ENCODE measurements at regions of chr16 and their contacts with region 1.

Region 1: DNA sequence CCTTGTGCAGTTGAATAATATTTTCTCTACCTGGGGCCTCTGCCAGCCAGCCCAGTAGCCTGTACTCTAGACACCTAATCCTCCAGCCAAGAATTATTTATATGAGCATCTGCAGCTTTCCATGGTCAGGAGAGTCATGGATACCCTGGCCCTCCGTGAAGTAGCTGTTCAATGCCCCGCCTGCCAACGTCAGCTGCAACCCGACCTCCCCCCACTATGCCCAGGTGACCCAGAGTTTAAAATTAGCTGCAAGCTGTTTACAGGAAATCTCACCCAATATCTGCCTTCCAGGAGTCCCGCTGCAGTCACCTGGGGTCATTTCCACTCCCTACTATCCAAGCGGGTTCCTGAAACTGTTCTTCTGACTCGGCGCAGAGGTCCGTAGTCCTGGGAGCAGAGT is 12.3 kb downstream of the SDR42E2 start:
- DNase-seq: no peak
- H3K4me3 ChIP-seq: no peak overlapping the region
- H3K27ac ChIP-seq: no peak overlapping the region
- H3K4me1 ChIP-seq: no peaks in the 10 kb centered on the region
- H3K27me3 ChIP-seq: no peaks in the 10 kb centered on the region
- CTCF ChIP-seq: no peak

Region 2: GRCh38 chr16:22109258-22109898 is 65.3 kb before region 1 on chr16:
- intact Hi-C with region 1: loop called (anchors 10 kb)
- DNase-seq: no peak
- H3K4me3 ChIP-seq: no peak overlapping the region
- H3K27ac ChIP-seq: no peak overlapping the region
- H3K4me1 ChIP-seq: no peaks in the 10 kb centered on the region
- H3K27me3 ChIP-seq: peaks cover 5% of the 10 kb centered on the region
- CTCF ChIP-seq: no peak